Activated T-helper 1 cell treated with anti-CD3 and anti-CD28 coated beads, Interleukin-12 subunit alpha, Interleukin-12 subunit beta, Interleukin-2, Interleukin-4 antibody, amounts not matched to agents 30 ng/mL and 10 ng/mL and 1 ng/mL, durations not matched to agents 14 hours and 24 hours and 36 hours (primary cell): ENCODE measurements at regions of chr16 and their contacts with region 1.

Region 1: GRCh38 chr16:29862884-29863668 is at the start of gene CDIPT:
- DNase-seq: peak; percentile 90
- H3K4me3 Mint-ChIP-seq: peak within 1 kb of the TSS; percentile 97
- H3K27ac Mint-ChIP-seq: peak within 1 kb of the TSS; percentile 100
- H3K4me1 Mint-ChIP-seq: peaks cover 24% of the 10 kb centered on the region
- H3K27me3 Mint-ChIP-seq: no peaks in the 10 kb centered on the region
- total RNA-seq, gene CDIPT: 83.7 and 85.5 TPM in 2 replicates

Region 2: DNA sequence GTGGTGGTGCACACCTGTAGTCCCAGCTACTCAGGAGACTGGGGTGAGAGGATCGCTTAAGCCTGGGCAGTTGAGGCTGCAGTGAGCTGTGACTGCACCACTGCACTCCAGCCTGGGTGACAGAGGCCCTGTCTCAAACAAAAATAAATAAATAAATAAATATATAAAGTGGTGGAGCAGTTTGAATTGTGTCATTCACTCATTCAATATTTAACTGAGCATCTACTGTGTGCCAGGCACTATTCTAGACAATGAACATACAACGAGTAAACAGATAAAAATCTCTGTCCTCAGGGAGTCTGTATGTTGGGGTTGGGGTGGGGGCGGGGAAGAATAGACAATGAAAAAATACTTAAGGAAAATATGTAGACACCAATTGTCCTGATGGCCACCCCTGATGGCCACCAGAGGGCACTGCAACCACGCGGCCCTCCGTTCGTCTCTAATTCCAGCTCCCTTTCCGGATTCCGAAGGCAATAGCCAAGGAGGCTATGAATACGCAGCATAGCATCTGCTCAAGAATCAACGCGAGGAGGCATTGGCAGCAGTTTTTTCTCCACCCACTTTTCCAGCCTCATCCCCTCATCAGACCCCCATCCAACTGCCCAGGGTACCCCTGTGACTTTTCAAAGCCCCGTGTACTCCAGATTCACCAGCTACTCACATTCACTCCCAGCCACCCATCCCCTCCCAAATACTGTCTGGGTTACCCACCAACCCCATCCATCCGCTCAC is 162.7 kb before region 1 on chr16:
- intact Hi-C with region 1: loop called (anchors 5 kb)
- DNase-seq: peak; percentile 59
- H3K4me3 Mint-ChIP-seq: peak overlapping the region; percentile 43
- H3K27ac Mint-ChIP-seq: peak overlapping the region; percentile 90
- H3K4me1 Mint-ChIP-seq: peaks cover 30% of the 10 kb centered on the region
- H3K27me3 Mint-ChIP-seq: no peaks in the 10 kb centered on the region

Region 3: DNA sequence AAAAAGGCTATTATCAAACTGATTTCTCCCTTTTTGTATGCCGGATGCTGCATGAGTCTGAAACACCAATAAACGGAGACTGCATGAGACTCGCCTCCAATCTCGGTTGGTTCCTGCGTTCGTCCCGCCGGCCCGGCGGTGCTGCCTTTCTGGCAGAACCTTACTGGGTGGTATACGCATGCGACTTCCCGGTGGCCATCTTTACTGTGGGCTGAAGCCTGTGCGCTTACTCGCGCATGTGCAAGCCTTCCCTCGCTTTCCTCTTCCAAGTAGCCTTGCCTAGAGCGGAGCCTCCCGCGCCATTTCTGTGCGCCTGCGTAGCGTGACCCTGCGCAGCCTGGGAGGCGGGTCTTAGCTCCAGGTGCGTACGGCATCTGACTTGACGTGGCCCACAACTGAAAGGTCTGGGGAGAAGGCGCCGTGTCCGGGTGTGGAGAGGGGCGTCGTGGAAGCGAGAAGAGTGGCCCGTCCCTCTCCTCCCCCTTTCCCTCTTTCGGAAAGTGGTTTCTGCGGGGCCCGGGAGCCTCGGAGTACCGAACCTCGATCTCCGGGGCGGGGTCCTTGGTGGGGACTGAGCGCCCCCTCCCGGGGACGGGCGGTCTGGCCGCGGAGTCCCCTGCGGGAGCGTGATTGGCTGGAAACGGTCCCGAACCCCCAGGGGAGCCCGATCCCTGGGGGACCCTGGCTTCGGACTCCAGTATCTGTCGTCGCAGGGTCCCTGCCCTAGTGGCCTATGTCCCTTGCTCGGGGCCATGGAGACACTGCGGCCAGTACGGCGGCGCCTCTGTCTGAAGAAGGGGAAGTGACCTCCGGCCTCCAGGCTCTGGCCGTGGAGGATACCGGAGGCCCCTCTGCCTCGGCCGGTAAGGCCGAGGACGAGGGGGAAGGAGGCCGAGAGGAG is 47.0 kb before region 1 on chr16 and contains the start of gene PAGR1:
- intact Hi-C with region 1: loop called (anchors 1 kb)
- DNase-seq: peak; percentile 99
- H3K4me3 Mint-ChIP-seq: peak within 1 kb of the TSS; percentile 94
- H3K27ac Mint-ChIP-seq: peak within 1 kb of the TSS; percentile 98
- H3K4me1 Mint-ChIP-seq: peaks cover 48% of the 10 kb centered on the region
- H3K27me3 Mint-ChIP-seq: no peaks in the 10 kb centered on the region
- total RNA-seq, gene PAGR1: 29.2 and 30.8 TPM in 2 replicates

Region 4: GRCh38 chr16:29900102-29900887 is 37.2 kb after region 1 on chr16 and contains the start of gene ASPHD1:
- intact Hi-C with region 1: loop called (anchors 1 kb)
- DNase-seq: no peak
- H3K4me3 Mint-ChIP-seq: peak within 1 kb of the TSS; percentile 82
- H3K27ac Mint-ChIP-seq: peak within 1 kb of the TSS; percentile 58
- H3K4me1 Mint-ChIP-seq: peaks cover 14% of the 10 kb centered on the region
- H3K27me3 Mint-ChIP-seq: peaks cover 32% of the 10 kb centered on the region
- total RNA-seq, gene ASPHD1: 4.2 and 4.7 TPM in 2 replicates

Region 5: DNA sequence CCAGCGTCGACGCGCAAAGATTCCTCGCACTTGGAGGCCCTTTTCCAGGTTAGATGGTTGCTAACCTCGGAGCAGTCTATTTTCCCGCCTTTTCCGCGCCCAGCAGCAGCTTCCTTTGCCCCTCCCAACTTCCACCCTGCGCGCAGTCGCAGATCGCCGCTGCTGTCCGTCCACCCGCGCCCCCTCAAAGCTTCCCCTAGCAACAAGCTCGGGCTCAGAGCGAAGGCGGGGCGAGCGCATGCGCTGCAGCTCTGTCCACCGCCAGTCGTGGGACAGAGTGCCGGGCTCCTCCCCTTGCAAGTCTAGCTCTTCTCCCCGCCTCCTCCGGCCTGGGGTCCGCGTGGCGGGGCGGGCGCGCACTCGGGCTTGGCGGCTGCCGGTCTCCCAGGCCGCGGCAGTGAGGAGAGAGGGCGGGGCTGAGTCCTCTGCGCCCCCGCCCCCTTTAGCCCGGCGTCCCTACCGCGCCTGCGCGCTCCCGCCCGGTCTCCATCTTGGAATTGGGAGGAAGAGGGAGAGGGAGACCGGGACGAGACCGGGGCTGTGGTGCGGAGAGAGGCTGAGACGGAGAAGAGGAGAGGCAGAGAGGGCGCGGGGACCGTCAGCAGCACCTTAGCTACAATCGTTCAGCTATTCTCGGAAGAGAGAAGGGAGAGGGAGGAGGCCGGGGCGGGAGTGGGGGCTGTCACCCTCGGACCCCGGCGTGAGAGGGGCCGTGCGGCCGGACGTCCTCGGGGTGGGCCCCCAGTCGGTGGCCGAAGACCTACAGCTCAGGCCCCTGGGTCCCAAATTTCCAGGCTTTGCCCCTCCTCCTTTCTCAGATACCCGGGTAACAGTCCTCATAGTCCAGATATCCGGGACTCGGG is 110.5 kb after region 1 on chr16 and contains the start of gene TAOK2:
- intact Hi-C with region 1: loop called (anchors 1 kb)
- DNase-seq: peak; percentile 97
- H3K4me3 Mint-ChIP-seq: peak within 1 kb of the TSS; percentile 92
- H3K27ac Mint-ChIP-seq: peak within 1 kb of the TSS; percentile 91
- H3K4me1 Mint-ChIP-seq: peaks cover 36% of the 10 kb centered on the region
- H3K27me3 Mint-ChIP-seq: no peaks in the 10 kb centered on the region
- total RNA-seq, gene TAOK2: 38.5 and 39.7 TPM in 2 replicates

Region 6: GRCh38 chr16:30052671-30053372 is 189.7 kb after region 1 on chr16:
- intact Hi-C with region 1: loop called (anchors 2 kb)
- DNase-seq: peak; percentile 89
- H3K4me3 Mint-ChIP-seq: peak overlapping the region; percentile 87
- H3K27ac Mint-ChIP-seq: peak overlapping the region; percentile 82
- H3K4me1 Mint-ChIP-seq: peaks cover 28% of the 10 kb centered on the region
- H3K27me3 Mint-ChIP-seq: no peaks in the 10 kb centered on the region